ENCODE measurements at regions of chr7 and their contacts with region 1.

Region 1: GRCh38 chr7:31633894-31634494 is 53.0 kb upstream of the PPP1R17 start:
- DNase-seq: no peak
- ATAC-seq: peak; percentile 76

Region 2: DNA sequence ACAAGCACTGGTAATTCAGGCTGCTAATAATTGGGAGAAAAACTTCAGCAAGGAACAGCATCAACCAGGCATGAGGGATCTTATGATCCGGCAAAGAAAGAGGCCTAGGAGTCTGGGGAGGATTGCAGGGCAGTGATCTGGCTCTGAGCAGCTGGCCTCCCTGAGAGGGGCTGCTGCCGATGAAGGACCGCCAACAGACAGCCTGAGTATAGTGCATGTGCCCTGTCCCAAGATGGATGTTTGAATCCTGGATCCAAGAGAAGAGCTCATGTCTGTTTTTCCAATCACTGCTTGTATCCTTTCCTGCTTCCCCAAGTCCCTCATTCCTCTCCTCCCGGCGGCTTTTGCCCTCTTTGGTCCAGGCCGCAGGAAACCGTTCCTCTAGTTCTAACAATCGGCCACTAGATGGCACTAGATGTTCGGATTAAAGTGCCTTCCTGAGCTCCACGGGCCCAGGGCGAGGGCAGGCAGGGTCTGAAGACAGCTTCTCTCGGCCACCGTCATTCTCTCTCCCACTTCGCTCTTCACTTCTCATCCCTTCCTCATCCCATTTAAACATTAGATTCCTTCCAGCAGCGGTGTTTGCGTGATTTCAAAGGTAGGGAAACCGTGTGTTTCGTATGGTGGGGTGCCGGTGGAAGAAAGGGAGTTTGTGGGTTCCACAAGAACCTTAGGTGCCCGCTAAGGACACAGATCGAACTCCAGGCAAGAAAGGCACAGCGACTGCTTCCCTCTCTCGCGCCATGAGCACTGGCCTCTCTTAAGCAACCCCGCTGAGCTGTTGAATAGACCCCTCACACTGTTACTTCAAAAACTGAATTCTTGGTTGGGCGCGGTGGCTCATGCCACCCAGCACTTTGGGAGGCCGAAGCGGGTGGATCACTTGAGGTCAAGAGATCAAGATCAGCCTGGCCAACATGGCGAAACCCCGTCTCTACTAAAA is 499.5 kb before region 1 on chr7:
- intact Hi-C with region 1: loop called (anchors 2 kb)
- DNase-seq: peak; percentile 72
- ATAC-seq: peak; percentile 95

Region 3: GRCh38 chr7:31192986-31193385 is 441.0 kb before region 1 on chr7:
- intact Hi-C with region 1: loop called (anchors 5 kb)
- DNase-seq: peak; percentile 73
- ATAC-seq: peak; percentile 83

Region 4: GRCh38 chr7:31408140-31408745 is 225.8 kb before region 1 on chr7:
- intact Hi-C with region 1: no loop called
- DNase-seq: no peak
- ATAC-seq: no peak

Region 5: GRCh38 chr7:31443457-31443856 is 190.5 kb before region 1 on chr7:
- intact Hi-C with region 1: loop called (anchors 2 kb)
- DNase-seq: no peak
- ATAC-seq: peak; percentile 42

Region 6: DNA sequence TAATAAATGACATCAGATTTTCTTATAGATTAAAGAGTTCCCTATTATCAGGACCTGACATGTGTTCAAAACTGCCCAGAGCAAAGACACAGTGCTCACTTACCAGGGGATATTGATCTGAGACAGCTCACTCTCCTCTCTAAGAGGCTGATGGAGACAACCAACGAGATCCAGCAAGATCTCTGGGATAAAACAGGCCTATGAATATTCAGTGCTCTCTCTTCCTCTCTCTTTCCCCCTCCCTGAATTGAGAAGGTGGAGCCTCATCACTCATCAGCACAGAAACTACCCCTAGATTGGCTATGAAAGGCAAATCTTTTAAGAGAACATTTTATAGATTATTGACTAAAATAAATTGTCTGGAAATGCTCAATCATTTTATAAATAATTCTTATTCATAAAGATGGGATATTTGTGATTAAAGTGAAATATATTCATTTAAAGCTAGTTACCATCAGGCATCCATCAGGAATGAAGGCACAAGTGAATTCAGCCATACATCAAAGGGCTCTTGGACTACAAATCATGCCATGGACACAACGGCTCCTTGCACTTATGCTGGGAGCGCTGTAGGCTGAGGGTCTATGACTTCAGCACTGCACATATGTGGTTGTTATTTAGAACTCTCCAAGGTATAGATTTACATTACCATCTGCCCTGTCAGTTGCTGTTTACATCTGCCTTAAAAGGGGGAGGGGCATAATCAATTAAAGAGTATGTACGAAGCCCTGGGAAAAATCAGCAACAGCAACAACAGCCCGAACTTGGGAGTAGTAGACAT is 49.6 kb after region 1 on chr7:
- intact Hi-C with region 1: no loop called
- DNase-seq: no peak
- ATAC-seq: no peak